ENCODE measurements at regions of chr1 and their contacts with region 1.

Region 1: DNA sequence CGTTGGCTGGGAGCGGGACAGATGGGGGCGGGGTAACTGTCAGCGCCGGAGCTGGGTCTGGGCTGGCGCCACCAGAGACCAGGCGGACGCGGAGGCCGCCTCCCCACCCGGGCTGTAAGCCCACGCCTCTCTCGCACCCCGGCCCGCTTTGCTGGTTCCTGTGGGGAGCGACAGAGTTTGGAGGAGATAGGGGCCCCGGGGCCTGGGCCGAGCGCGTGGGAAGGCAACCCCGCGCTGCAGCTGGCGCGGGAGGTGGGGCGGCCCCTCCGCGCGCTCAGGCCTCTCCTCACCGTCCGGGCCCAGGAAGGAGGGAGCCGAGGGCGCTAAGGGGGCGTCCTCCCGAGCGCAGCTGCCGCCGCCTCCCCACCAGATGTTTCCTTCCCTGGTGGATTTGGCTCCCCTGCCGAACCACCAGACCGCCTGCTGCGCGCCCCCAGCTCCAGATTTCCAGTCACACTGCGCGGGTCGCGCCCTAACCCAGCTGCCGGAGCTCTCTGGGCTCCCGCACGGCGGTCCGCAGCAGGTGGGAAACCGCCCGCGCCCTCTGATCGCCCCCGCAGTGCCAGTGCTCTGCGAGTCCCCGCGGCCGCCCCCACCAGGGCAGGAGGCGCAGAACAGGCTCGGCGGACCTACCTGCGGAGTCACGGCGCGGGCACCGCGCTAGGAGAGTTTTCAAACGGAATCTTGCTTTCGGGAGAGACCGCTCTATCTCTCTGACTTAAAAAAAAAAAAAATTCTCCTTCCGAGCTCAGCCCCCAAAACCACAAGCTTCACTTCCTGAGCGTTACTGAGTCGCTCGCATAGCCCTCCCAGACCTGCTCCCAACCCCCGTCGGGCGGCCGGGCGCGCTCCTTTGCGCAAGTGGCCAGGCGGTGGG is 1.1 kb downstream of the GFI1 start:
- DNase-seq: peak; percentile 62 to 89 (median 78)
- ATAC-seq: peak; percentile 66
- H3K4me3 ChIP-seq: peak overlapping the region; percentile 89
- H3K4me3 Mint-ChIP-seq: peak overlapping the region; percentile 96
- H3K27ac ChIP-seq: peak overlapping the region in 1 of 2 donors; percentile 65
- H3K27ac Mint-ChIP-seq: peak overlapping the region; percentile 87
- H3K4me1 ChIP-seq: peaks cover 46% of the 10 kb centered on the region
- H3K4me1 Mint-ChIP-seq: peaks cover 56% of the 10 kb centered on the region
- H3K27me3 ChIP-seq: no peaks in the 10 kb centered on the region
- H3K27me3 Mint-ChIP-seq: no peaks in the 10 kb centered on the region
- CTCF ChIP-seq: peak; percentile 62

Region 2: GRCh38 chr1:92310185-92310597 is 175.4 kb before region 1 on chr1:
- CTCF ChIA-PET with region 1: interaction called, 6 read pairs
- POLR2A ChIA-PET with region 1: interaction called, 76 read pairs
- intact Hi-C with region 1: loop called (anchors 5 kb)
- DNase-seq: peak in 3 of 14 experiments; percentile 62 to 66 (median 64)
- ATAC-seq: peak; percentile 72
- H3K4me3 ChIP-seq: no peak overlapping the region
- H3K4me3 Mint-ChIP-seq: no peak overlapping the region
- H3K27ac ChIP-seq: no peak overlapping the region
- H3K27ac Mint-ChIP-seq: no peak overlapping the region
- H3K4me1 ChIP-seq: peaks cover 24% of the 10 kb centered on the region
- H3K4me1 Mint-ChIP-seq: peaks cover 39% of the 10 kb centered on the region
- H3K27me3 ChIP-seq: no peaks in the 10 kb centered on the region
- H3K27me3 Mint-ChIP-seq: no peaks in the 10 kb centered on the region
- CTCF ChIP-seq: peak; percentile 75

Region 3: GRCh38 chr1:92411511-92411910 is 74.1 kb before region 1 on chr1:
- CTCF ChIA-PET with region 1: no interaction called
- POLR2A ChIA-PET with region 1: interaction called, 11 read pairs
- intact Hi-C with region 1: no loop called
- DNase-seq: peak in 1 of 14 experiments; percentile 51
- ATAC-seq: peak; percentile 34
- H3K4me3 ChIP-seq: no peak overlapping the region
- H3K4me3 Mint-ChIP-seq: no peak overlapping the region
- H3K27ac ChIP-seq: no peak overlapping the region
- H3K27ac Mint-ChIP-seq: no peak overlapping the region
- H3K4me1 ChIP-seq: peaks cover 32% of the 10 kb centered on the region
- H3K4me1 Mint-ChIP-seq: peaks cover 38% of the 10 kb centered on the region
- H3K27me3 ChIP-seq: no peaks in the 10 kb centered on the region
- H3K27me3 Mint-ChIP-seq: no peaks in the 10 kb centered on the region
- CTCF ChIP-seq: no peak

Region 4: DNA sequence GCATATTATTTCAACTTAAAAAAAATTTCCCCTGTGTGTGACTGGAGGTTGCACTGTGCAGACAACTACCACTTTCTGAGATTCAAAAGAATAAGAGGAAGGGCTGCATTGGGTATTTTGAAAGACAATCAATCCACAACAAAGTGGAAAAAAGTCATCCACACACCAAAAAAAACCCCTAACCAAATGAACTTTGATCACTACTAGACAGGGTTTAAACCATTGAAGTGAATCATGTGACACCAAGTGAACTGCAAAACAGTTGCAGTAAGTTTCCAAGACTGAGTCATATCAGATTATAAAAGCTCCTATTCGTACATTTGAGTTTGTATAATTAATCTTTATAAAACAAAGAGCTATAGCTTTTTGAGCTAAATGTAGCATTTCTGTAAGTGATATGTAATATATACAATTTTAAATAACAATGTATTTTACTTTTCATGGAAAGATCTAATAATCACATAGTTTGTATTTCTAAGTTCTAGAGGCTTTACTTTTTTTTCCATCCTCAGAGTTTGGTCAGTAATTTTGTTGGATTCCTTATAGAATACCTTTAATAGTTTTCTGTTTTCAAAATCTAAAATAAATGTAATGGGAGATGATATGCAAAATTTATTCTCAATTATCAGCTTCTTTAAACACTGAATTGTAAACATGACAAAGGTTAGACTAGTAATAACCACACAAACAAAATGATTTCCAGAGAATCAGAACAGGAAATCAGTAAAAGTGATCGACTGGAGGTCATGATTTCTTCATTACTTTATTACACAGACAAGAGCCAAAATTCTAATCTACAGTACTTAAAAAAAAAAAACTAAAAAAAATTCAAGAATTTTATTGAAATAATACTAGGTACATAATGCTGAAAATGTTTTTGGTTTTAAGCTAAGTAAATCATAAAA is 51.6 kb after region 1 on chr1:
- CTCF ChIA-PET with region 1: interaction called, 50 read pairs
- POLR2A ChIA-PET with region 1: interaction called, 96 read pairs
- intact Hi-C with region 1: loop called (anchors 2 to 5 kb)
- DNase-seq: peak in 6 of 14 experiments; percentile 5 to 88 (median 53)
- ATAC-seq: peak; percentile 79
- H3K4me3 ChIP-seq: peak overlapping the region; percentile 25
- H3K4me3 Mint-ChIP-seq: peak overlapping the region; percentile 77
- H3K27ac ChIP-seq: peak overlapping the region; percentile 57 to 70
- H3K27ac Mint-ChIP-seq: peak overlapping the region; percentile 87
- H3K4me1 ChIP-seq: peaks cover 5% of the 10 kb centered on the region
- H3K4me1 Mint-ChIP-seq: peaks cover 78% of the 10 kb centered on the region
- H3K27me3 ChIP-seq: no peaks in the 10 kb centered on the region
- H3K27me3 Mint-ChIP-seq: no peaks in the 10 kb centered on the region
- CTCF ChIP-seq: no peak

Region 5: DNA sequence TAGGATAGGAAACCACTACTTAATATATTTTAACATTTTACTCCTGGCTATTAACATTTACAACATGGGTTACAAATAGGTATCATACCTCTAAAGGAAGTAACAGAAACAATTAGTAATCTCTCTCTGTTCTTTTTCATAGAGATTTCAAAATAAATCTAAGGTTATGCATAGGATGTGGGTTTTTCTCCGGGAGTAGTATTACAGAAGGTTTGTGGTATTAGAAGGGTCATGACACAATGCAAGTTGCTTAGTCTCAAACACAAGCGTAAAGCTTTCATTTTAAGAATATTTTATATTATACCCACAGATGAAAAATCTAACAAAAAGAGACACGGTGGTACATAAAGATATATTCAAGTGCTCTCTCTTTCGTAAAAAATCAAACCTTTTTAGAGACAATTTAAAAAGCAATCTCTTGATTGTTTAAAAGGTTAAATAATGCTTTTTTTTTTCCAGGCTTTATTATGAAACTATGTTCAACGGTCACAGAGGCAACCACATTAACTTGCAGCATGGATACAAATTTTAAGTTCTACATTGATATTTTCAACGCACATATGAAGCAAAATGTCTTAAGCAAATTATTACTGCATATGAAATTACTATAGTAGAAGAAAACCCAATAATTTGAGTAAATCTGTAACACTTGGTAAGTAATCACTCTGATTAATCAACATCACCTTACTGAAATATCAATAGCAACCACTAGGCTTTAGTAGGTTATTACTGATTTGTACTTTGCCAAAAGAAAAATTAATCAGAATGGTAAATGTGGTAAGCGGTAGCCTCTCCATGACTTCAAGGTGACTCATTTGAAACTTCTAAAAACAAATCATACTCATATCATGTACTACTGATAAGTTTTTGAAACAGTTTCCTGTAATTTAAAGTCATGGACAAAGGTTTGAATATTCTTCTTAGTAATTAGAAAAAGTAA is 98.5 kb after region 1 on chr1:
- CTCF ChIA-PET with region 1: interaction called, 4 read pairs
- POLR2A ChIA-PET with region 1: interaction called, 29 read pairs
- intact Hi-C with region 1: loop called (anchors 2 to 5 kb)
- DNase-seq: peak in 3 of 14 experiments; percentile 58 to 89 (median 66)
- ATAC-seq: peak; percentile 93
- H3K4me3 ChIP-seq: peak overlapping the region; percentile 34
- H3K4me3 Mint-ChIP-seq: peak overlapping the region; percentile 34
- H3K27ac ChIP-seq: peak overlapping the region; percentile 23 to 56
- H3K27ac Mint-ChIP-seq: peak overlapping the region; percentile 61
- H3K4me1 ChIP-seq: peaks cover 13% of the 10 kb centered on the region
- H3K4me1 Mint-ChIP-seq: peaks cover 59% of the 10 kb centered on the region
- H3K27me3 ChIP-seq: no peaks in the 10 kb centered on the region
- H3K27me3 Mint-ChIP-seq: no peaks in the 10 kb centered on the region
- CTCF ChIP-seq: no peak

Region 6: DNA sequence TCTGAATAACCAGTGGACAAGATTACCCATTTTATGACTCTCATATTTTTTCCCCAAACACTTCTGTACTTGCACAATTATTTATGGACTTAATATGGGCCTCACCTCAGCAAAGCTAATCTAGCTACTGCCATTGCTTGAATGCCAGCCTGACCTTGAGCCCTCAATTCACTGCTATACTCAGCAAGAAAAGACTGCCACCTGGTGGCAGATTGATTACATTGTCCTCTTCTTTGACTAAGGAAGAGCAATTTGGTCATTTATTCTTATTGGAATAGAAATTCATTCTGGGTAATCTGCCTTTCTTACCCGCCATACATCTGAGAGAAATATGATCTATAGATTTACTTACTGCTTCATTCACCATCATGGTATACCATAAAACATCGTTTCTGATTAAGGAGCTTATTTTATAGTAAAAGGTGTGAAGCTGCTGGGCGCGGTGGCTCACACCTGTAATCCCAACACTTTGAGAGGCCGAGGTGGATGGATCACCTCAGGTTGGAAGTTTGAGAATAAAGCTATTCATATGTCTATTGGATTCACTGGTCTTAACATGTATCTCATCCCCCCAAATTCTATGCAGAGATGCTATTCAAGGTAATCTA is 508.6 kb after region 1 on chr1:
- CTCF ChIA-PET with region 1: no interaction called
- POLR2A ChIA-PET with region 1: no interaction called
- intact Hi-C with region 1: no loop called
- DNase-seq: peak; percentile 20 to 91 (median 68)
- ATAC-seq: peak; percentile 92
- H3K4me3 ChIP-seq: no peak overlapping the region
- H3K4me3 Mint-ChIP-seq: peak overlapping the region; percentile 56
- H3K27ac ChIP-seq: no peak overlapping the region
- H3K27ac Mint-ChIP-seq: peak overlapping the region; percentile 73
- H3K4me1 ChIP-seq: peaks cover 47% of the 10 kb centered on the region
- H3K4me1 Mint-ChIP-seq: peaks cover 48% of the 10 kb centered on the region
- H3K27me3 ChIP-seq: no peaks in the 10 kb centered on the region
- H3K27me3 Mint-ChIP-seq: no peaks in the 10 kb centered on the region
- CTCF ChIP-seq: peak; percentile 91

Measured in CD4-positive, alpha-beta T cell (primary cell).